Endothelial cell of umbilical vein (primary cell): ENCODE measurements at regions of chr2 and their contacts with region 1.

Region 1: GRCh38 chr2:161238560-161239325 is 69.5 kb upstream of the PSMD14 start:
- DNase-seq: peak; percentile 68
- H3K4me3 ChIP-seq: peak overlapping the region; percentile 20 to 59 (median 49)
- H3K27ac ChIP-seq: no peak overlapping the region
- H3K4me1 ChIP-seq: peaks cover 12% of the 10 kb centered on the region
- H3K27me3 ChIP-seq: no peaks in the 10 kb centered on the region
- CTCF ChIP-seq: no peak
- POLR2A ChIP-seq: no peak

Region 2: GRCh38 chr2:160574468-160575142 is 664.1 kb before region 1 on chr2:
- CTCF ChIA-PET with region 1: no interaction called
- POLR2A ChIA-PET with region 1: no interaction called
- dilution Hi-C with region 1: no loop called
- intact Hi-C with region 1: no loop called
- DNase-seq: no peak
- H3K4me3 ChIP-seq: no peak overlapping the region
- H3K27ac ChIP-seq: no peak overlapping the region
- H3K4me1 ChIP-seq: no peaks in the 10 kb centered on the region
- H3K27me3 ChIP-seq: no peaks in the 10 kb centered on the region
- CTCF ChIP-seq: no peak
- POLR2A ChIP-seq: no peak

Region 3: DNA sequence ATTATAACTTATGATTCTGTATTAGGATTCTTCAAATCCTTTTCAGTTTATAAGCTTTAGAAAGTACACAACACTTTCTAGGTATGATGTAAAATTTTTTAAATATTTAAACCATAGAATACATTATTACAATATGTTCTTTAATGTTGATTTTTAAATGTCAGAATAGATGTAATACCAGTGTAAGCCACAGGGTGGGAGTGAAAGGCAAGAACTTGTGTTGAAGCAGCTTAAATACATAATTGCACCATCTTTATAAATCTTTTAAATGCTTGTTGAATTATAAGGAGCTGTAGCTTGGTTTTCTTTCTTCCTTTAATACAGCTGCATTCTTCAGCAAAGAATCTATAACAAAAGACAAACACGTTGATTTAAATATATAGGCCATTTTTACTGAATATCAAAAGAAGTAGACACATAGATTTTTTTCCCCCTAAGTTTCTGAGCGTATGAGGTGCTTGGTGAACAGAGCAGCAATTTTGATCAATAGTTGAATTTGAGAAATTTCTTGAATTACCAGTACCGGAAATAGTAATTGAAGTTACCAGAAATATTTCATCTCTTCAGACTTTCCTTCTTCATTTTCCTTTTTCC is 15.5 kb before region 1 on chr2:
- CTCF ChIA-PET with region 1: interaction called, 44 read pairs
- POLR2A ChIA-PET with region 1: no interaction called
- dilution Hi-C with region 1: no loop called
- intact Hi-C with region 1: no loop called
- DNase-seq: peak; percentile 77
- H3K4me3 ChIP-seq: no peak overlapping the region
- H3K27ac ChIP-seq: no peak overlapping the region
- H3K4me1 ChIP-seq: no peaks in the 10 kb centered on the region
- H3K27me3 ChIP-seq: no peaks in the 10 kb centered on the region
- CTCF ChIP-seq: peak; percentile 24 to 26
- POLR2A ChIP-seq: no peak

Region 4: DNA sequence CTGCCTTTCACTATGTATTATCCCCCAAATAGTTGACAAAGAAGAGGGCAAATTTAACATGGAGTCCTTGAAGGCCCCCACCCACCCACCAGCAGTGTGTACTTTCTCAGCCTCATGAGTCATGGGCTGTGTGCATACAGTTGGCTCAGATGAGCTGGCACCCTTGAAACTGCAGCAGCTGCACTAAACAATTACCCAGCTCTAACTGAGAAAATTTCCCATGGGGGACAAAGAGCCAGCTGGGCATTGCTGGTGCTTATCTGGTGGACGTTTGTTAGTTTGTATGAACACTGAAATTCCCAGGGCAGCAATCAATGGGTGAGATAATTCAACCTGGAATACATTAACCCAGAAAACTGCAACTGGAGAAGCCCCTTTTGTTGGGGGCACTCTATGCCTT is 1236.9 kb after region 1 on chr2:
- CTCF ChIA-PET with region 1: no interaction called
- POLR2A ChIA-PET with region 1: no interaction called
- dilution Hi-C with region 1: no loop called
- intact Hi-C with region 1: no loop called
- DNase-seq: no peak
- H3K4me3 ChIP-seq: no peak overlapping the region
- H3K27ac ChIP-seq: no peak overlapping the region
- H3K4me1 ChIP-seq: no peaks in the 10 kb centered on the region
- H3K27me3 ChIP-seq: peaks cover 0 to 3% of the 10 kb centered on the region in 2 experiments
- CTCF ChIP-seq: no peak
- POLR2A ChIP-seq: no peak